Right ventricle myocardium superior (tissue), 1 donor: ENCODE measurements at regions of chr16 and their contacts with region 1.

Region 1: DNA sequence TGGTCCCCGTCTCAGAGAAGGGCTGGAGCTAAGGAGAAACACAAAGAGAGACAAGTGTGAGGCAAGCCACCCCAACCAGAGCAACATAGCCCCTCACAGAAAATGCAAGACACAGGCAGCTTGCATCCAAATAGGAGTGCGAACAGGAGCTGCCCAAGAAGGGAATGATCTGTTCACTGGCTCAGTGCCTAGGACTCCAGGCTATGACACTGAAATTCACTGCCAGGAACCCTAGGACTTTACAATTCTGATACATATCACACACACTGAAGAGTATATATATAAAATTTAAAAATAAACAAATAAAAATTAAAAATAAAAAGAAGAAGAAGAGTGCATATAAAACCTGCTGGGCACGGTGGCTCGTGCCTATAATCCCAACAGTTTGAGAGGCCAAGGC is 5.2 kb downstream of the ZNF23 start:
- DNase-seq: no peak
- ATAC-seq: no peak

Region 2: DNA sequence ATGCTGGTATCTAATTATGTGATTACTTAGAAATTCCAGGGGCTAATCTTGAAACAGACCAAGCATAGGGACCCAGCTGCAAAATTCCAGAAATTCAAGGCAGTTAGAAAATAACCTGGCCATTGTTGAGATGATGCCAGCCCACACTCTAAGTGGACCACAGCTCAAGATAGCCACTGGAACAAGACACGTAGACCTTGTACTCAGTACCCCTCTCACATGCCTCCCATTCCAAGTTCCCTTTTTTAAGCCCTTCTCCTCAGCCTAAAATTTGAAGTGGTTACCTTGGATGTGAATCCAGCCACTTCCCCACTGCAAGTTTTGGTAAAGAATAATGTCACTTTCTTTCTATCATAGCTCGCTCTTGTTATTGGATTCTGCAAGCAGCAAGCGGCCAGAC is 36.4 kb after region 1 on chr16:
- intact Hi-C with region 1: loop called (anchors 5 kb)
- DNase-seq: no peak
- ATAC-seq: no peak